Right ventricle myocardium inferior (tissue), 1 donor: ENCODE measurements at regions of chr2 and their contacts with region 1.

Region 1: GRCh38 chr2:196592912-196593881 is 46.3 kb upstream of the CCDC150 start:
- DNase-seq: peak; percentile 69
- ATAC-seq: peak; percentile 79

Region 2: GRCh38 chr2:196473617-196474016 is 119.6 kb before region 1 on chr2:
- intact Hi-C with region 1: loop called (anchors 2 kb)
- DNase-seq: no peak
- ATAC-seq: peak; percentile 93

Region 3: DNA sequence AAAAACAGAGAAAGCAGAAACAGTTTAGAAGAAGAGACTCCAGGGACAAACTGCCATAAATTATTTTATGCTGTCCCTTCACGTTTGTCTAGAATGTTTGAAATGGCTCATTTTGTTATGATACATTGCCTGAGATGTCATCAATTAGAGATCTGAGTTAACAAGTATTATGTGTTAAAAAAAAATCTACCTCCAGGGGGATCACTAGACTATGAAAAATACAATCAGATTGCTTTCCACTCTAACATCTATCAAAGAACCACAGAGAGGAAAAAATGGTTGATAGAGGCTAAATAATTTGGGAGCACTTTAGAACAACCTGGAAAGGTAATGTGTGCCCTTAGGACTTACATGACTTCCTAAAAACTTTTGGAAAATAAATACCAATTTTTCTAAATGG is 57.5 kb before region 1 on chr2:
- intact Hi-C with region 1: loop called (anchors 2 kb)
- DNase-seq: no peak
- ATAC-seq: no peak